Activated T-helper 2 cell treated with anti-CD3 and anti-CD28 coated beads, Interferon-gamma antibody, Interleukin-2, Interleukin-4, amounts not matched to agents 10 μg/mL and 5 μg/mL and 100 μg/mL, durations not matched to agents 14 hours and 24 hours and 36 hours (primary cell): ENCODE measurements at regions of chr2 and their contacts with region 1.

Region 1: DNA sequence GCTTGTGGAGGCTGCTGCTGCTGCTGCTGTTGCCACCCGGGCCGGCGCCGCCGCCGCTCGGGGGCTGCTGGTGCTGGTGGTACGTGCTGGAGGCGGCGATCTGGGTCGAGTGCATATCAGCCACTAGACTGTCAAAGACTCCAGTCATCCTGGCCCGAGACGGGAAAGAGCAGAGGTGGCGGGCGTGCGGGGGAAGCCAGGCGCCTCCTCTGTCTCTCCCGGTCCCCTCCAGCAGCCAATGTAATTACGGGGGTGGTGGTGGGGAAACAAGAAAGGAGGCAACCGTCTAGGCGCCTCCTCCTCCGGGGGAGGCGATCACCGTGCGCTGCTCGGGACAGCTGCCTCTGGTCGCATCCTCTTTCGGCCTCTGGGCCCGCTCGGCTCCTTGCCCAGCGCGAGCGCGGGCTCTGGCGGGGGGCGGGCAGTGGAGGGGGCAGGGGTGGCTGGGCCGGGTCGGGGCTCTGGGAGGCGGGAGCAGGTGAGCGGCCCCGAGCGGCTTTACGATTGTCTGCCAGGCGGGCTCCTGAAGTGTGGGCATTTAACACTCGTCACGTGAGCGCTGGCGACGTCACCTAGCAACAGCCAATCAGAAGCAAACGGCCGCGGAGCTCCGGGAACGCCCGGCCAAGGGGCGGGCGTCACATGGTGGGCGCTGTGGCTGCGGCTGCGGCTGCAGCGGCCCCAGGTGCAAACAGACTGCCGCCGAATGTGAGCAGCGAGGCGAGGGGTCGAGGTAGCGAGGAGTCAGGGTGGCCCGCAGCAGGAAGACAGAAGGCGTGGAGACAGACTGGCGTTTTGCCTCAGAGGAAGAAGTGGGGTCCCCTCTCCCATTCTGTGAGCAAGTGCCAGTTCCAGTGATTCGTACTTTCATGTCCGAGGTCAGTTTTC is at the start of gene DLX2:
- DNase-seq: peak; percentile 54
- H3K4me3 Mint-ChIP-seq: peak within 1 kb of the TSS; percentile 77
- H3K27ac Mint-ChIP-seq: no peak within 1 kb of the TSS
- H3K4me1 Mint-ChIP-seq: peaks cover 42% of the 10 kb centered on the region
- H3K27me3 Mint-ChIP-seq: peaks cover 66% of the 10 kb centered on the region
- total RNA-seq, gene DLX2: 0.14 TPM in 1 of 2 replicates, not detected in the other

Region 2: DNA sequence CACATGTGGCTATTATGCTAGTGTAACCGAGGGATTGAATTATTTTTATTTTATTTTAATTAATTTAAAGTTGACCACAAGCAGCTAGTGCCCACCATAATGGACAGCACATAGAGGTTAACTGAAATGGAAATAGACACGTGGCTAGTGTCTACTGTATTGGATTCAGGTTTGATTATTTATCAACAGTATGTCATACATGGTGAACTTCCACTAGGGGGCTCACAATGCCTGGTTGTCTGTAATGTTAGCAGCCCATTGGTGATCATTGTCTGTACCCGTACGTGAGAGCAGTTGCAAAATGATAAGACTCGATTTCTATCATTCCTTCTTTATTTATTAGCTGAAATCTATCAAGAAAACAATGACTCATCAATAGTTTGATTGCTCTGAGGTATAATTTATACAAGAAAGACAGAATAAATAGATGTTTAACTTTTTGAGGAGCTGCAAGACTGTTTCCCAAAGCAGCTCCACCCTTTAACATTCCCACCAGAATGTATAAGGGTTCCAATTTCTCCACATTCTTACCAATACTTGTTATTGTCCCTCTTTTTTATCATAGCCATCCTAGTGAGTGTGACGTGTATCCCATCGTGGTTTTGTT is 503.8 kb before region 1 on chr2:
- intact Hi-C with region 1: loop called (anchors 2 kb)
- DNase-seq: peak; percentile 15
- H3K4me3 Mint-ChIP-seq: no peak overlapping the region
- H3K27ac Mint-ChIP-seq: no peak overlapping the region
- H3K4me1 Mint-ChIP-seq: peaks cover 2% of the 10 kb centered on the region
- H3K27me3 Mint-ChIP-seq: peaks cover 19% of the 10 kb centered on the region

Region 3: GRCh38 chr2:171811245-171811628 is 291.4 kb before region 1 on chr2:
- intact Hi-C with region 1: loop called (anchors 1 kb)
- DNase-seq: no peak
- H3K4me3 Mint-ChIP-seq: no peak overlapping the region
- H3K27ac Mint-ChIP-seq: no peak overlapping the region
- H3K4me1 Mint-ChIP-seq: peaks cover 1% of the 10 kb centered on the region
- H3K27me3 Mint-ChIP-seq: no peaks in the 10 kb centered on the region

Region 4: DNA sequence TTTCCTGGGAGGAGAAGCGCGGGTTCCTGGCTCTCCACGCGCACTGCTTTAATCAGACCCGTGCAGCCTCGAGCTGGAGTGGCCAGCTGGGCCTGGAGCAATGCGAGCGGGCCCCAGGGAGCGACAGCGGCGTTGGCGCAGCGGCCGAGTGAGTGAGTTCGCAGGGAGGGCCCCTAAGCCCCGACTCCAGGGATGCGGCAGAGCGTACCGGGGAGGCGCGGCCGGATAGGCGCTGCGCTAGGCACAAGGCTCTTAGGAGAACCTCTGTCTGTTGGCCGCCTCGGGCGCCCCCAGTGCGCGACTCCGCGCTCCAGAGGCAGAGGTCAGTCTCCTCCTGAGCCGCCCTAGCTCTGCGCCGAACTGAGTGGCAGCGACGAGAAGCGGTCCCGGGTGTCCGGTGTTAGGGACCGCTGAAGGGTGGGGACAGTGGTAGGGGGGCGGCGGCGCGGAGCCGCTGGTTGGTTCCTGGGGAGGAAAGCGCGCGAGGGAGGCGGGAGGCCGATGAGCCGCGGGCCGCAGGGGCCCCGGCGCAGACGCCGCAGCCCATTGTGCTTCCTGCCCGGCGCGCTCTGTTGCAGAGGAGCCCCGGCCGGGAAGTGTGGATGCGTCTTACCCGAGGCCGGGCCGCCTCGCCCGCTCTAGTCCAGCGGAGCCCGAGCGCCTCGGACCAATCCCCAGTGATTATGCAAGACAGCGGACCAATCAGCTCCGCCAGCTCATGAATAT is 17.7 kb before region 1 on chr2:
- intact Hi-C with region 1: loop called (anchors 1 kb)
- DNase-seq: no peak
- H3K4me3 Mint-ChIP-seq: peak overlapping the region; percentile 75
- H3K27ac Mint-ChIP-seq: peak overlapping the region; percentile 58
- H3K4me1 Mint-ChIP-seq: peaks cover 33% of the 10 kb centered on the region
- H3K27me3 Mint-ChIP-seq: peaks cover 92% of the 10 kb centered on the region

Region 5: GRCh38 chr2:172153156-172153555 is 50.5 kb after region 1 on chr2:
- intact Hi-C with region 1: no loop called
- DNase-seq: no peak
- H3K4me3 Mint-ChIP-seq: no peak overlapping the region
- H3K27ac Mint-ChIP-seq: no peak overlapping the region
- H3K4me1 Mint-ChIP-seq: peaks cover 1% of the 10 kb centered on the region
- H3K27me3 Mint-ChIP-seq: peaks cover 21% of the 10 kb centered on the region